ENCODE measurements at regions of chr10 and their contacts with region 1.

Region 1: DNA sequence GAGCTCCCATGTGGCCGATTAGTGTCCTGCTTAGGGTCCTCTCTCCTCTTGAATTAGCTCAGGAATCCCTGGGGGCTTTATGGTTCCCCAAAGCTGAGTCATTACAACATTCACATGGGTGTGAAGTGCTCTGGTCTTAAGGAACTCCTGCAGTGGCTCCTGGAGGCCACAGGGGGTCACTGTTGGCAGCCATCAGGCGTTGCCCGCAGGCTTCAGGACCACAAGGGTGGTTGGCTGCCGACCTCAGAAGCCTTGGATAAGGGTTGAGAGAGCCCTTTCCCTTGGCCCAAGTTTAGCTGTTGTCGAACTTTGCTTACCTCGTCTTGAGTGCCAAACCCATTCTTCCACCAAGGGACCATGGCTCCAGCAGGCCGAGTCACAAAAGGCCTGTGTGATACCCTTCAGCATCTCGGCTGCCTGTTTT is 61.7 kb downstream of the SH2D4B start:
- DNase-seq: no peak
- ATAC-seq: peak; percentile 76
- H3K4me3 Mint-ChIP-seq: no peak overlapping the region
- H3K27ac Mint-ChIP-seq: no peak overlapping the region
- H3K4me1 Mint-ChIP-seq: peaks cover 25% of the 10 kb centered on the region
- H3K27me3 Mint-ChIP-seq: no peaks in the 10 kb centered on the region
- CTCF ChIP-seq: no peak

Region 2: DNA sequence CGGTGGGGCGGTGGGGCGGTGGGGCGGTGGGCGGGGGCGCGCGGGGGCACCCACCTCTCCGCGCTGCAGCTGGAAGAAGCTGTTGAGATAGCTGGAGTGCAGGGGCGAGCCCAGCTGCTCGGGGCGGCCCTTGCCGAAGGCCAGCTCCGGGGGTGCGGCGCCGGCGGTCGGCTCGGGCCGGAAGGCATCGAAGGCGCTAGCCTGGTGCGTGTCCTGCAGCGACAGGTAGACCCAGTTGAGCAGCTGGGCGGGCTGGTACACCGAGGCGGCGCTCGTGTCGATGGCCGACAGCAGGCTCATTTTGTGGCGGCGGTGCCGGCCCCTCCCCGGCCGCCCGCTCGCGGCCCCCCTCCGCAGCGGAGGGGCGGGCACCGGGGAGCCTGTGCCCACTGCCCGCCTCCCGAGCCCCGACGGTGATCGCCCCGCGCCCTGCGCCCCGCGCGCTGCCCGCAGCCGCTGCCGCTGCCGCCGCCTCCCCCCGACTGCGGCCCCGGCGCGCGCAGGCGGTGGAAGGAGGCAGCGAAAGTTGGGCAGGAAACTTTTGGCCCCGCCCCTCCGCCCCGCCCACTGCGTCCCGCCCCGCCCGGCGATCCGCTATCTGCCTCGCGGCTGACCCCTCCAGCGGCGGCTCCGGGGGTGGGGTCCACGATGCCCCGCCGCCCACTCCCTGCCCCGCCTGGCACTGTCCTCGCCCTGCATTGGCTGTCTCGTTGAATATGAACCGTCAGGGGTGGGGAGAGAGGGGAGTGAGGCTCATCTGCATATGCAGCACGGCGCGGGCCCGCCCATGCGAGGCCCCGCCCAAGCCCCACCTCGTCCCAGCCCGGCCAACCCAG is 1154.1 kb before region 1 on chr10 and contains the start of gene ZCCHC24:
- CTCF ChIA-PET with region 1: no interaction called
- POLR2A ChIA-PET with region 1: no interaction called
- intact Hi-C with region 1: loop called (anchors 10 kb)
- DNase-seq: peak; percentile 92
- ATAC-seq: peak; percentile 93
- H3K4me3 Mint-ChIP-seq: peak within 1 kb of the TSS; percentile 87
- H3K27ac Mint-ChIP-seq: peak within 1 kb of the TSS; percentile 50
- H3K4me1 Mint-ChIP-seq: peaks cover 26% of the 10 kb centered on the region
- H3K27me3 Mint-ChIP-seq: peaks cover 2% of the 10 kb centered on the region
- CTCF ChIP-seq: no peak
- total RNA-seq, gene ZCCHC24: 1.1 and 1.3 TPM in 2 replicates

Region 3: DNA sequence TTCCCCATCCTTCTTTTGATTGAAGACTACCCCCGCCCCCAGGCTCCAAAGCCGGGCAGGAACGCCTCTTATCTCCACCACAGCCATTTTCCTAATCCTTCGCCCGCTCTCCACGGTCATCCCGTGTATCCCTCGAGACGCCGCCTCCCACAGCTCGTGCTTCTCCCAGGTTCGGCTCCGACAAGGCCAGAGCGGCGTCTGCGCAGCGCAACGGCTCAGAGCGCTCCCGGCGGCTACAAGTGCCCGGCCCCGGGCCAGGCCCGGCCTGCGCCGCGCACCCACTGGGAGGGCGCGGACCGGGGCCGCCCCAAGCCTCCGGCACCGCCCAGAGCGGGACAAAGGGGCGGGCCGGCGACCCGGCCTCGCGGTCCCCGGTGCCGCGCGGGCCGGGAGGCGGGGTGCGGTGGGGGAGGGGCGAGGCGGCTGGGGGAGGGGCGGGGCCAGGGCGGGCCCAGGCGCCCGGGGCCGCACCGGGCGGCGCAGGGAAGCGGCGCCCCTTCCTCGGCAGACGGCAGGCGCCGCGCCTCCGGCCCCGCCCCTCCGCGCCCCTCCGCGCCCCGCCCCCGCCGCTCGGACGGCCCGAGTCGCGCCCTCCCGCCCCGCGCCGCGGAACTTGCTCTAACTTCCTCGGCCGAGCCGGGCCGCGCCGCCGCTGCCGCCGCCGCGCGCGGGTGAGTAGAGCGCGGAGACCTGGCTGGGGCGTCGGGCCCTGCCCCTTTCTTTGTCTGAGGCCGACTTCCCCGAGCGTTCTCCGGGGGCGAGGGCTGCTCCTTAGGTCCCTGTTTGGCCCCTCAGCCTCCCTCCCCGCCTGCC is 145.5 kb before region 1 on chr10 and contains the start of gene TSPAN14:
- CTCF ChIA-PET with region 1: no interaction called
- POLR2A ChIA-PET with region 1: interaction called, 4 read pairs
- intact Hi-C with region 1: loop called (anchors 2 kb)
- DNase-seq: peak; percentile 73
- ATAC-seq: peak; percentile 77
- H3K4me3 Mint-ChIP-seq: peak within 1 kb of the TSS; percentile 95
- H3K27ac Mint-ChIP-seq: peak within 1 kb of the TSS; percentile 89
- H3K4me1 Mint-ChIP-seq: peaks cover 50% of the 10 kb centered on the region
- H3K27me3 Mint-ChIP-seq: no peaks in the 10 kb centered on the region
- CTCF ChIP-seq: no peak
- total RNA-seq, gene TSPAN14: 18.9 and 20.7 TPM in 2 replicates

Region 4: GRCh38 chr10:80535671-80536365 is 63.6 kb before region 1 on chr10:
- CTCF ChIA-PET with region 1: interaction called, 3 read pairs
- POLR2A ChIA-PET with region 1: no interaction called
- intact Hi-C with region 1: loop called (anchors 1 kb)
- DNase-seq: peak; percentile 76
- ATAC-seq: peak; percentile 89
- H3K4me3 Mint-ChIP-seq: peak overlapping the region; percentile 88
- H3K27ac Mint-ChIP-seq: peak overlapping the region; percentile 89
- H3K4me1 Mint-ChIP-seq: peaks cover 35% of the 10 kb centered on the region
- H3K27me3 Mint-ChIP-seq: no peaks in the 10 kb centered on the region
- CTCF ChIP-seq: peak; percentile 38

Region 5: GRCh38 chr10:80540981-80541750 is 58.3 kb before region 1 on chr10:
- CTCF ChIA-PET with region 1: interaction called, 3 read pairs
- POLR2A ChIA-PET with region 1: no interaction called
- intact Hi-C with region 1: loop called (anchors 1 kb)
- DNase-seq: no peak
- ATAC-seq: peak; percentile 59
- H3K4me3 Mint-ChIP-seq: peak overlapping the region; percentile 76
- H3K27ac Mint-ChIP-seq: peak overlapping the region; percentile 87
- H3K4me1 Mint-ChIP-seq: peaks cover 46% of the 10 kb centered on the region
- H3K27me3 Mint-ChIP-seq: no peaks in the 10 kb centered on the region
- CTCF ChIP-seq: no peak

Region 6: DNA sequence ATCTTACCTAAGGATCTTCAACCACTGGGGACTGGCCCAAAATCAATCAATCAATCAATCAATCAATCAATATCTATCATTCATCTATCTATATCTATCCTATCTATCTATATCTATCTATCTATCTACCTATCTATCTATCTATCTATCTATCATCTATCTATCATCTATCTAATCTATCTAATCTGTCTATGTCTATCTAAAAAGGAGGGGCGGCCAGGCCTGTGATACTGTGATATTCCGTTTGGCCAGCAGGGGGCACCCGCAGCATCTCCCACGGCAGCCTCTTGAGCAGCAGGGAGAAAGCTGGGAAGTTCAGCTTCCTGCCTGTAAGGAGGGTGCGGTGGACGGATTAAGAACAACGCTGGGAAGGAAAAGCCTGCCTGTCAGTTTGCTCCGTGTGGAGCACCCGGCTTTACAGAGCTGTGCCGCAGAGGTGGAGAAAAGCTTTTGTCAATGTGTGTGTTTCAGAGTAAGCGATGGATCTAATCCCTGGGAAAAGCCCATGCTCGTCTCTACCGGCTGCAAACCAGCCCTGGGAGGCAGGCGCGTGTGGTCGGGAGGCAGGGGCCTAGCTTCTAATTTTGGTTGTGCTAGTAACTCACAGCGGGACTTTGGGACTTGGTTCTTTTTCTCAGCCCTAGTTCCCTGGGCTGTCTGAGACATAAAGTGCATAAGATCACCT is 63.3 kb after region 1 on chr10:
- CTCF ChIA-PET with region 1: interaction called, 4 read pairs
- POLR2A ChIA-PET with region 1: no interaction called
- intact Hi-C with region 1: loop called (anchors 5 kb)
- DNase-seq: peak; percentile 58
- ATAC-seq: peak; percentile 71
- H3K4me3 Mint-ChIP-seq: no peak overlapping the region
- H3K27ac Mint-ChIP-seq: no peak overlapping the region
- H3K4me1 Mint-ChIP-seq: peaks cover 2% of the 10 kb centered on the region
- H3K27me3 Mint-ChIP-seq: peaks cover 21% of the 10 kb centered on the region
- CTCF ChIP-seq: peak; percentile 97

Region 7: DNA sequence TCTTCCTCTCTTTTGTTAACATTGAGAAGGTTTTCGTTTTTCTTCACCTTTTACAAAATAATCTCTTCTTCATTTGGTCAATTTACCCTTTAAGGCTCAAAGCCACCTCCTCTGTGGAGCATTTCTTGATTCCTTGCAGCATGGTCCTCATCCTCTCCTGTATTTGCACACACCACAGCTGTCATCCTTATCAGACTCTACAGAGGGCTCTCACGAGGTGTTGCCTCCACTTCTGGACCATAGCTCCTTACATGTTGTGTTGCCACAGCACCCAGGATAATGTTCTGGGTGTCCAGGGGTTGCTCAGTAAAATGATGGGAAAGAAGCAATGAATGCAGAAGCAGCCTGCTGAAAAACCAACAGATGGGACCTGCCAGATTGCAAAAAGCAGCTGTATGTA is 131.1 kb after region 1 on chr10:
- CTCF ChIA-PET with region 1: no interaction called
- POLR2A ChIA-PET with region 1: no interaction called
- intact Hi-C with region 1: no loop called
- DNase-seq: no peak
- ATAC-seq: no peak
- H3K4me3 Mint-ChIP-seq: no peak overlapping the region
- H3K27ac Mint-ChIP-seq: no peak overlapping the region
- H3K4me1 Mint-ChIP-seq: no peaks in the 10 kb centered on the region
- H3K27me3 Mint-ChIP-seq: peaks cover 7% of the 10 kb centered on the region
- CTCF ChIP-seq: no peak

Region 8: GRCh38 chr10:80760914-80761371 is 161.5 kb after region 1 on chr10:
- CTCF ChIA-PET with region 1: no interaction called
- POLR2A ChIA-PET with region 1: no interaction called
- intact Hi-C with region 1: no loop called
- DNase-seq: no peak
- ATAC-seq: no peak
- H3K4me3 Mint-ChIP-seq: no peak overlapping the region
- H3K27ac Mint-ChIP-seq: no peak overlapping the region
- H3K4me1 Mint-ChIP-seq: no peaks in the 10 kb centered on the region
- H3K27me3 Mint-ChIP-seq: no peaks in the 10 kb centered on the region
- CTCF ChIP-seq: no peak

Measured in activated B cell treated with CpG ODN at 0.5 μM for 24 hours (primary cell).